ENCODE measurements at regions of chr6 and their contacts with region 1.

Region 1: DNA sequence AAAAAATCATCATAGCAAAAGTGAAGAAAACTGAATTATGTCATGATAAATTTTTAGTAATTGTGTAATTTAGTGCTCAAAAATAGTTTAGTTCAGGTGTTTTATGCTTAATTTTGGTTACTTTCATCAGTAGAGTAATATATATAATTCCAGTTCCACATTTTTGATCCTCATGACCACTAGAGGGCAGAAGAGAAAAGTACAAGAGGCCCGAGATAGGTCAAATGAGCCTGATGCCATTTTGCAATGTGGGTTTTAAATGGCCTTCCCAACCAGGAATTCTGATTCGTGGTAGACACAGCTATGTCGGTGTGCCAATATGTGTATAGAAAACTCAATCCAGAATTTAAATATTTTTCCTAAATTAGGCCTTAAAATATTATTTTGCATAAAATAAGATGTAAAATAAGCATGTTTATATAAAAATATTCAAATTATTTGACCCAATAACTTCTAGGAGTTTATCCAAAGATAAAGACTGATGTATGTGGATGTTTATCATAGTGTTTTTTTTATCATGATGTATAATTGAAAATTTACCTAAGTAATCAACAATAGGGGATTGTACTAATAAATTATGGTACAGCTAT is 159.7 kb upstream of the RPS6KA2 start:
- DNase-seq: peak; percentile 31 to 63
- ATAC-seq: peak in 1 of 2 experiments; percentile 77; a peak in 4 of 6 replicates
- H3K4me3 ChIP-seq: no peak overlapping the region
- H3K27ac ChIP-seq: no peak overlapping the region
- H3K4me1 ChIP-seq: no peaks in the 10 kb centered on the region
- CTCF ChIP-seq: peak; percentile 62
- EP300 ChIP-seq: no peak
- POLR2A ChIP-seq: no peak
- RAD21 ChIP-seq: peak; percentile 59 to 64

Region 2: GRCh38 chr6:166849749-166850183 is 63.0 kb after region 1 on chr6:
- CTCF ChIA-PET with region 1: no interaction called
- POLR2A ChIA-PET with region 1: no interaction called
- DNase-seq: no peak
- ATAC-seq: no peak
- H3K4me3 ChIP-seq: no peak overlapping the region
- H3K27ac ChIP-seq: no peak overlapping the region
- H3K4me1 ChIP-seq: no peaks in the 10 kb centered on the region
- CTCF ChIP-seq: no peak
- EP300 ChIP-seq: no peak
- POLR2A ChIP-seq: no peak
- RAD21 ChIP-seq: no peak

Region 3: DNA sequence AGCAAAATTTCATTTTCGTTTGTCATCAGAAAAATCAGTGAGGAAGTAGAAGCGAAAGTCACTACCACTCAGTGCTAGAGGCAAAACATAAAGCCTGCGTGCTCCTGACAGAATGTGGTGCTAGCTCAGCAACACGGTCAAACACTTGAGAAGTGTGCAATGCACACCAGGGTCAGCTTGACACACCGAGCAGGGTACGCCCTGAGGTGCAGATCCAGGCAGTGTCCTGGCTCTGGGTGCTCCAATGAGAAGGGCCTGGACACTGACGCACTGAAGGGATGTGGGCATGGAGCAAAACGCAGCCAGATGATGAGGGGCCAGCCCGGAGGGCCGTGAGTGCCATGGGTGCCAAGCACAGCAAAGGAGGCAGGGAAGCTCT is 163.6 kb after region 1 on chr6:
- CTCF ChIA-PET with region 1: interaction called, 10 read pairs
- POLR2A ChIA-PET with region 1: no interaction called
- DNase-seq: no peak
- ATAC-seq: no peak
- H3K4me3 ChIP-seq: no peak overlapping the region
- H3K27ac ChIP-seq: no peak overlapping the region
- H3K4me1 ChIP-seq: no peaks in the 10 kb centered on the region
- CTCF ChIP-seq: no peak
- EP300 ChIP-seq: no peak
- POLR2A ChIP-seq: no peak
- RAD21 ChIP-seq: no peak

Measured in A549 (cell line).